Sigmoid colon (tissue), 7 donors: ENCODE measurements at regions of chr20 and their contacts with region 1.

Region 1: DNA sequence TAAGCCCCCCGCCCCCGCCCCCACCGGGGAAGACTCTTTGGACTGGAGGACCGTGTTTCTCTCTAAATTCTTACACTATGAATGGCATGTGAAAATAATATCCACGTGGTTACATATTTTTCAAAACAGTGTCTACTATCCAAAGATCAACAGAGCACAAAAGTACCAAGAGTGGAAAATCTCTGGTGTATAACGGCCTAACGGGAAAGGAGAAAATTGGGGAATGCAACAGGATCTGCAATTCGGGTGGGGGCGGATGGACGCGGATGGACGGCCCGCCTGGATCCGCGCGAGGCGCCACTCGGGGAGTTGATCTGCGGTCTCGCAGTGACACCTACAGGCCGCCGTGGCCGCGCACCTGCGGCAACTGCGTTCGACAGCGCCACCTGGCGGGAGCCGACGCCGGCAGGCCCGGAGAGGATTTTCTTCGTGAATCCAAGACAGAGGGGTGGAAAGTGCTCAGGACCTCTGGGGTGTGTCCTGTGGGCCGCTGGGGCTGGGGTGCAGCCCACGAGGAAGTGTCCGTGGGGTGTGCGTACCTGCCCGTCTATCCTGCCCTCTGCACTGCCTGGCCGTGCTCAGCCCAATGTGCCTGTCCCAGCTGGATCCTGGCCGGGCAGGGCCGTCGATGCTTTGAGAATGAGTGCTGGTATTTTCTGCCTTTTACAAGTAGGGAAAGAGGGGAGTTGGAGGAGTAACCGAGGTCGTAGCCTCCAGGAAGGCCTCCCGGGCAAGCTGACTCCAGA is 18.6 kb downstream of the ANKRD60 start:
- DNase-seq: peak; percentile 91
- H3K4me3 ChIP-seq: no peak overlapping the region
- H3K27ac ChIP-seq: no peak overlapping the region
- H3K4me1 ChIP-seq: peaks cover 0 to 8% (median 1%) of the 10 kb centered on the region in 4 donors
- H3K27me3 ChIP-seq: peaks cover 0 to 16% (median 8%) of the 10 kb centered on the region in 3 donors
- CTCF ChIP-seq: peak; percentile 99 to 100 (median 100)
- EP300 ChIP-seq: no peak
- POLR2A ChIP-seq: no peak

Region 2: DNA sequence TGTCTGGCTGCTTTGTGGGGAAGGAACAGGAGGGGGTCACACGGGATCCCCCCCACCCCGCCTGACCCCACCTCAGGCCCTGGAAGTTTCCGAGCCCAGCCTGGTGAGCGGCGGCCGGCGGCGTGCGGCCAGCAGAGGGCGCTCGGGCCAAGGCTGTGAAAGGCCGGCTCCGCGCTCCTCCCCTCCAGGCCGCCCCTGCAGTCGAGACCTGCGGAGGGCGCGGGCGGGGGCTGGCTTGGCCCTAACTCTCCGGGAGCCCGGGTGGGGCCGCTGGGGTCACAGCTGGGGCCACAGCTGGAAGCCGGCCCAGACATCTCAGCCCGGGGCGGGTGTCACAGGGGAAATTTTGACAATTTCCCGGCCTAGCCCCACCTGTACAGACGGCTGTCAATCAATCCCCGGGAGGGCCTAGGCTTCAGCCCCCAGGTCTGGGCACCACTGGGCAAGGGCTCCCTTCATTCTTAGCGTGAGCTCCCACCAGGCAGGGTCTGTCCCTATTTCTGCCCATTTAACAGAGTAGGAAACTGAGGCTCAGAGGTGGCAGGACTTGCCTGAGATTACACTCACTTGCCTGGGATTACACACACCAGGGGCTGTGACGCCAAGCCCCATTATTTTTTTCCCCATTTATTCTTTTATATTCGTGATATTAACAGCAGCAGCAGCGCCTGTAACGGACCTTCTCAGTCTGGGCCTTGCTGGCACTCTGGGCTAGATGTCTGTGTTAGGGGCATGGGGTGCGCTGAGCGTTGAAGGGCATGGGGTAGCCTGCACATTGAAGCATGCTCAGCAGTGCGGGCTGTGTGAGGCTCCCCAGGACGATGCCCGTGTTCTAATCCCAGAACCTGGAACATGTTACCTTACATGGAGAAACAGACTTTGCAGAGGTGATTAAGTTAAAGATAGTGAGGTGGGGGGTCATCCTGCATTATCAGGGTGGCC is 612.6 kb before region 1 on chr20:
- intact Hi-C with region 1: loop called (anchors 1 kb)
- DNase-seq: peak; percentile 79
- H3K4me3 ChIP-seq: peak overlapping the region in 1 of 4 donors; percentile 20
- H3K27ac ChIP-seq: no peak overlapping the region
- H3K4me1 ChIP-seq: peaks cover 0 to 12% (median 8%) of the 10 kb centered on the region in 4 donors
- H3K27me3 ChIP-seq: peaks cover 0 to 7% (median 0%) of the 10 kb centered on the region in 3 donors
- CTCF ChIP-seq: peak; percentile 88 to 99 (median 91)
- EP300 ChIP-seq: no peak
- POLR2A ChIP-seq: no peak